Naive thymus-derived CD4-positive, alpha-beta T cell (primary cell): ENCODE measurements at regions of chr3 and their contacts with region 1.

Region 1: DNA sequence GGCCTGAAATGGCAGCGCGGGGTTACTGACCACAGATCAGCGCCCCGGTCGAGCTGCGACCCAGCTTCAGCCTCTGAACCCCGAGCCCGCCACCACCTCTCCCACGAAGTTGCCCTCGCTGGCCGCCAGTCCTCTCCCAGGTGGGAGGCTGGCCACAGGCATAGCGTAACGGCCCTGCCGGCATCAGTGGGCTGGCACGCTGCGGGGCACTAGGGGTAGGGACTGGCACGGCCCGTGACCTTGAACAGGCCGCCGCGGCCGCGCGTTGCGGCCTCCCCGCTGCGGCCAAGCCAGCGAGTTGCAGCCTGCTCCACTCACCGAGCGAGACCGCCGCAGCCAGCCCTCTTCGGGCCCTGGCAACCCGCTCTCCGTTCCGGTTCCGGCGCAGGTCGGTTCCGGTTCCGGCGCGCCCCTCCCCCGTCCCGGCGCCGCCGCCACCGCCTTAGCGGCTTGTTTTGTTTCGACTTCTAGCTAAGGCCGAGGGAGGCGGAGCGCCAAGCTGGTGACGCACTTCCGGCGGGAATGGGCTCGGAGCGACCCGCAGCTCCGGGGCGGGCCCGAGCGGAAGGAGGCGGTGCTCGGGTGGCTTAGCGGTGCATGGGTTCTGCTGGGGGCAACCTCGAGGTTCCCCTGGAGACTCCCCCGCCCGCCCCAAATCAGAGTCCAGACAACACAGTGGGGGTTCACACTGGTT is at the start of gene USP19:
- DNase-seq: peak; percentile 92 to 96 (median 95)
- ATAC-seq: peak; percentile 96
- H3K4me3 ChIP-seq: peak within 1 kb of the TSS; percentile 70
- H3K4me3 Mint-ChIP-seq: peak within 1 kb of the TSS; percentile 80 to 97 (median 88)
- H3K27ac ChIP-seq: peak within 1 kb of the TSS; percentile 92
- H3K27ac Mint-ChIP-seq: peak within 1 kb of the TSS; percentile 83 to 96 (median 94)
- H3K4me1 ChIP-seq: peaks cover 17 to 27% of the 10 kb centered on the region in 2 donors
- H3K4me1 Mint-ChIP-seq: peaks cover 0 to 31% (median 25%) of the 10 kb centered on the region in 7 donors
- H3K27me3 ChIP-seq: no peaks in the 10 kb centered on the region
- H3K27me3 Mint-ChIP-seq: no peaks in the 10 kb centered on the region
- total RNA-seq, gene USP19: 60.0 to 106 (median 78.0) TPM

Region 2: DNA sequence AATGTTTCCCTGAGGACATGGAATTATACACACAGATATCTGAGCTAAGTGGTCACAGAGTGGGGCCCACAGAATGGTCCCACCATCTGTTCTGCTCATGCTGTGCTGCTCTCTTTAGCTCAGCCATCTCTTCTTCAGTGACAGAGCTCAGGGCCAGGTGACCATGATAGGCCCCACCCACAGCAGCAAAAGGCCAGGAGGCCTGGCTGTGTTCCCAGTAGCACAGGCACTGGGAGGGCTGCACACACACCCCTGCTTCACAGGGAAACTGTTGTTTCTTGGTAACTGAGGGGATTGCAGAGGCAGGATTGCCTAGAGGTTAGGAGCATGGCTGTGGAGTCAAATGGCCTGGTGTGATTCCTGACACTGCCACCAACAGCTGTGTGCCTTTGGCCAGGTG is 753.4 kb before region 1 on chr3:
- CTCF ChIA-PET with region 1: no interaction called
- POLR2A ChIA-PET with region 1: no interaction called
- intact Hi-C with region 1: no loop called
- DNase-seq: no peak
- ATAC-seq: no peak
- H3K4me3 ChIP-seq: no peak overlapping the region
- H3K4me3 Mint-ChIP-seq: no peak overlapping the region
- H3K27ac ChIP-seq: no peak overlapping the region
- H3K27ac Mint-ChIP-seq: peak overlapping the region in 1 of 9 donors; percentile 44
- H3K4me1 ChIP-seq: no peaks in the 10 kb centered on the region
- H3K4me1 Mint-ChIP-seq: peaks cover 0 to 3% (median 0%) of the 10 kb centered on the region in 7 donors
- H3K27me3 ChIP-seq: no peaks in the 10 kb centered on the region
- H3K27me3 Mint-ChIP-seq: peaks cover 0 to 12% (median 0%) of the 10 kb centered on the region in 5 donors

Region 3: GRCh38 chr3:49007068-49007770 is 113.4 kb before region 1 on chr3 and contains the start of gene WDR6:
- CTCF ChIA-PET with region 1: no interaction called
- POLR2A ChIA-PET with region 1: interaction called, 12 read pairs
- intact Hi-C with region 1: loop called in 1 of 2 experiments (anchors 1 kb)
- DNase-seq: peak; percentile 86 to 98 (median 96)
- ATAC-seq: peak; percentile 95
- H3K4me3 ChIP-seq: peak within 1 kb of the TSS; percentile 96
- H3K4me3 Mint-ChIP-seq: peak within 1 kb of the TSS; percentile 94 to 100 (median 98)
- H3K27ac ChIP-seq: peak within 1 kb of the TSS; percentile 90
- H3K27ac Mint-ChIP-seq: peak within 1 kb of the TSS; percentile 95 to 100 (median 98)
- H3K4me1 ChIP-seq: peaks cover 8 to 16% of the 10 kb centered on the region in 2 donors
- H3K4me1 Mint-ChIP-seq: peaks cover 14 to 34% (median 28%) of the 10 kb centered on the region in 7 donors
- H3K27me3 ChIP-seq: no peaks in the 10 kb centered on the region
- H3K27me3 Mint-ChIP-seq: no peaks in the 10 kb centered on the region
- total RNA-seq, gene WDR6: 170 to 335 (median 204) TPM

Region 4: DNA sequence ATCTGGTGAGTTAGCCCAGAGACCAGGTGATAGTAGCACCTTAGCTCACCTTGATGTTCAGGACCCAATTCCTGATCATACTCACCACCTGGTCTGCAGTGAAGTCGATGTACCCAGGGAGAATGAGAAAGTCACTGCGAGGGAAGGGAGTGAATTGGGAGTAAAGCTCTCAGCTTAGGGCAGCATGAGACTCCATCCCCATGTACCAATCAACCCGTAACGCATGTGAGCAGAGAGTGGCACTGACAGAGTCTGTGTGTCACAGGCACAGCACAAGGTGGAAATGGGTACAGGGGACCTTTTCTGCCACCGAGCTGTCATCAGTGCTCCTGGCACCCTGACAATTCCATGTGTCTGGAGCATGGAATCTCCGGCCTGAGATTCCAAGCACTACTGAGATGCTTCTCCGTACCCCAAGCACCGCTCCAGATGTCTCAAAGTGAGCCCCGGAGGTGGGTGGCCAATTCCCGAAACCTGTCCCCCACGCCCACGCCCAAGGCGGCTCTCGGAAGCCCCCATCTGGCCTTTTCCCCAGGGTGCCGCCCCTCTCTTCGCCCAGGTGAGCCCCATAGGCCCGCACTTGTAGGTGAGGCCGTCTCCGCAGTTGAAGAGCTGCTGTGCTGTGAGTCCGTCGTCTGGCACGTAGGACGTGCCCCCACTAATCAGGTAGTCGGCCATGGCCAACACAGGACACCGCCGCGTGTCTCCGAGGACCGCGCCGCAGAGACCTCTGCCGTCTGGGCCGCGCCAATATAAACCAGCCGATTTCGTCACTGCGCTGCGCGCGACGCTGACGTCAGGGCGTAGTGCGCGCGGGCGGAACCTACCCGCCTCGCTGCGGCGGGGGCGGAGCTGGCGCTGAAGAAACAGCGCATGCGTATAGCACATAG is 91.7 kb before region 1 on chr3 and contains the start of gene IMPDH2:
- CTCF ChIA-PET with region 1: no interaction called
- POLR2A ChIA-PET with region 1: interaction called, 11 read pairs
- intact Hi-C with region 1: no loop called
- DNase-seq: peak; percentile 89 to 95 (median 93)
- ATAC-seq: peak; percentile 97
- H3K4me3 ChIP-seq: peak within 1 kb of the TSS; percentile 74
- H3K4me3 Mint-ChIP-seq: peak within 1 kb of the TSS; percentile 86 to 96 (median 94)
- H3K27ac ChIP-seq: peak within 1 kb of the TSS; percentile 98
- H3K27ac Mint-ChIP-seq: peak within 1 kb of the TSS; percentile 92 to 100 (median 98)
- H3K4me1 ChIP-seq: peaks cover 10 to 11% of the 10 kb centered on the region in 2 donors
- H3K4me1 Mint-ChIP-seq: peaks cover 7 to 52% (median 34%) of the 10 kb centered on the region in 7 donors
- H3K27me3 ChIP-seq: no peaks in the 10 kb centered on the region
- H3K27me3 Mint-ChIP-seq: no peaks in the 10 kb centered on the region
- total RNA-seq, gene IMPDH2: 102 to 206 (median 121) TPM

Region 5: DNA sequence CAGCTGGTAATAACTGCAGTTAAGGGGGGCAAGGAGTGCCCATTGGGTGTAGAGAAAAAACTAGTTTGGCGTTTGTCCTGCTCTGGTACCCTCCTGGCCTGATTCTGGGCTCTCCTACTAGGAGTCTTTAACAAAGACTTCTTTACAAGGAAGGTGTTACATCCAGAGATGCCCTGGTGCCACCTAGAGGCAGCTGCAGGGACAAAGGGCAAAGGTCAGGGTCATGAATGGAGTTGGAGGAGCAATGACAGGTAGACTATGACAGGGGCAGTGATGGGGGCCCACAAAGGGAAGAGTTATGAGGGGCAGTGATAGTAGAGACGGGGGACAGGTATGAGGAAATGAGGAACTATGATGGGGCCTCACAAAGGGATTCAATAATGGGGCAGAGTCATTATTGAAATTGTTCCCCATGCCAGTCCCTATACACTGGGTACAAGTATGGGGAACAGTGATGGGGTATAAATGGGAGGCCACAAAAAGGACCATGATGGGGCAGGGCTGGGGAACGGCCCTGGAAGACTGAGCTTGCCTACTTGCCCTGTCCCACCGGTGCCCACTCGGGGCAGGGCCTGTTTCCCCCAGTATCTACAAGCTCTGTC is 37.6 kb after region 1 on chr3:
- CTCF ChIA-PET with region 1: interaction called, 6 read pairs
- POLR2A ChIA-PET with region 1: interaction called, 10 read pairs
- intact Hi-C with region 1: loop called in 1 of 2 experiments (anchors 2 kb)
- DNase-seq: peak in 8 of 9 donors; percentile 40 to 68 (median 59)
- ATAC-seq: peak; percentile 89
- H3K4me3 ChIP-seq: no peak overlapping the region
- H3K4me3 Mint-ChIP-seq: no peak overlapping the region
- H3K27ac ChIP-seq: peak overlapping the region; percentile 20
- H3K27ac Mint-ChIP-seq: peak overlapping the region in 6 of 9 donors; percentile 3 to 82 (median 18)
- H3K4me1 ChIP-seq: no peaks in the 10 kb centered on the region
- H3K4me1 Mint-ChIP-seq: peaks cover 0 to 10% (median 5%) of the 10 kb centered on the region in 7 donors
- H3K27me3 ChIP-seq: no peaks in the 10 kb centered on the region
- H3K27me3 Mint-ChIP-seq: no peaks in the 10 kb centered on the region

Region 6: DNA sequence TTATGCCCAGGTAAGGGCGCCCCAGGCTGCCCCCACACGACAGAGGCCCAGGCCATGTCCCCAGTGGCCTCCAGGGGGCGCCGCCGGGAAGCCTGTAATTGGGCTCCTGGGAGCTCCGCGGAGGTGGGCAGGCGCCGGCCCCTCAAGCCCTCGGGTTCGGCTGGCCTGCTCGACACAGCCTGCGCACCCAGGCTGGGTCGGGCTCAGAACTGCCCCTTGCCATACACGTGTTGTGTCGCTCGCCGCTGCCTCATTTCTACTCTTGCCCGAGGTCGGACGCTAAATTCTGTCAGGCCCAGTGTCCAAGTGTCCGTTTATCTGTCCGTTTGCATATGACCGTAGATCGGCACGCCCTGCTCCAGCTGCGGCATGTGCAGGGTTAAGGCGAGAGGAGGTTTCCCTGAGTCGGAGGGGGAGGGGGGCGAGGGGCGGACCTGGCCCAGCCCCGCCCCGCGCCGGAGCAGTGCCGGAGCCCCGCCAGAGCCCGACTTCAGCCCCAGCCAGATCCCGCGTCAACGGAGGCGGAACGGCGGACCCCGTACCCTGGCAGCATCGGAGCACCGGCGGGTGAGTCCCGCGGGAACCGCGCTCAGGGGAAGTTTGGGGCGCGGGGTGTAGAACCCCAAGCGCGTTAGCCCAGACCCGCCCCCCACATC is 50.7 kb after region 1 on chr3 and contains the start of gene KLHDC8B:
- CTCF ChIA-PET with region 1: no interaction called
- POLR2A ChIA-PET with region 1: interaction called, 20 read pairs
- intact Hi-C with region 1: loop called (anchors 1 kb)
- DNase-seq: peak; percentile 65 to 89 (median 76)
- ATAC-seq: peak; percentile 88
- H3K4me3 ChIP-seq: peak within 1 kb of the TSS; percentile 95
- H3K4me3 Mint-ChIP-seq: peak within 1 kb of the TSS; percentile 83 to 94 (median 88)
- H3K27ac ChIP-seq: peak within 1 kb of the TSS; percentile 58
- H3K27ac Mint-ChIP-seq: peak within 1 kb of the TSS; percentile 61 to 92 (median 78)
- H3K4me1 ChIP-seq: peaks cover 11 to 26% of the 10 kb centered on the region in 2 donors
- H3K4me1 Mint-ChIP-seq: peaks cover 8 to 40% (median 26%) of the 10 kb centered on the region in 7 donors
- H3K27me3 ChIP-seq: no peaks in the 10 kb centered on the region
- H3K27me3 Mint-ChIP-seq: no peaks in the 10 kb centered on the region
- total RNA-seq, gene KLHDC8B: 1.5 to 7.1 (median 5.2) TPM

Region 7: DNA sequence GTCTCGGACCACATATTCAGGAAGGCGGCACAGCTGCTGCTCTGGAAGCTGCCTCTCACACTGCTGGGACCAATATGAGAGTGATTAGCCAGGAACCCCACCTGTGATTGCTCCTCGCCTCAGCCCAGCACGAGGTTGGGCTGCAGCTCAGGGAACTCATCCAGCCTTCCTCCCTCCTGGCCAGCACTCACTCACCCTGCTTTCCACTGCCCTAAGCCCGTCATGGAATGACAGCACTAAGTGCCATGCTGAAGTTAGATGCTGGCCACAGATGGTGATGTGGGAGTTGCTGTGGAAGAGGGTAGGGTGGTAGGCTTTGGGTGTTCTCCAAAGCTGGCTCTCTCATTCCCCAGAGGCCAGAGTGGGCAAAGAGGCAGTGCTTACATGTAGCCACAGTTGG is 775.8 kb after region 1 on chr3:
- CTCF ChIA-PET with region 1: no interaction called
- POLR2A ChIA-PET with region 1: no interaction called
- intact Hi-C with region 1: no loop called
- DNase-seq: no peak
- ATAC-seq: no peak
- H3K4me3 ChIP-seq: no peak overlapping the region
- H3K4me3 Mint-ChIP-seq: no peak overlapping the region
- H3K27ac ChIP-seq: no peak overlapping the region
- H3K27ac Mint-ChIP-seq: no peak overlapping the region
- H3K4me1 ChIP-seq: no peaks in the 10 kb centered on the region
- H3K4me1 Mint-ChIP-seq: peaks cover 0 to 4% (median 0%) of the 10 kb centered on the region in 7 donors
- H3K27me3 ChIP-seq: no peaks in the 10 kb centered on the region
- H3K27me3 Mint-ChIP-seq: no peaks in the 10 kb centered on the region